ENCODE measurements at regions of chr5 and their contacts with region 1.

Region 1: GRCh38 chr5:111530298-111530740 is 18.0 kb upstream of the STARD4 start:
- DNase-seq: peak; percentile 88
- H3K4me3 Mint-ChIP-seq: peak overlapping the region; percentile 8
- H3K27ac Mint-ChIP-seq: peak overlapping the region; percentile 83
- H3K4me1 Mint-ChIP-seq: peaks cover 28% of the 10 kb centered on the region
- H3K27me3 Mint-ChIP-seq: peaks cover 3% of the 10 kb centered on the region

Region 2: DNA sequence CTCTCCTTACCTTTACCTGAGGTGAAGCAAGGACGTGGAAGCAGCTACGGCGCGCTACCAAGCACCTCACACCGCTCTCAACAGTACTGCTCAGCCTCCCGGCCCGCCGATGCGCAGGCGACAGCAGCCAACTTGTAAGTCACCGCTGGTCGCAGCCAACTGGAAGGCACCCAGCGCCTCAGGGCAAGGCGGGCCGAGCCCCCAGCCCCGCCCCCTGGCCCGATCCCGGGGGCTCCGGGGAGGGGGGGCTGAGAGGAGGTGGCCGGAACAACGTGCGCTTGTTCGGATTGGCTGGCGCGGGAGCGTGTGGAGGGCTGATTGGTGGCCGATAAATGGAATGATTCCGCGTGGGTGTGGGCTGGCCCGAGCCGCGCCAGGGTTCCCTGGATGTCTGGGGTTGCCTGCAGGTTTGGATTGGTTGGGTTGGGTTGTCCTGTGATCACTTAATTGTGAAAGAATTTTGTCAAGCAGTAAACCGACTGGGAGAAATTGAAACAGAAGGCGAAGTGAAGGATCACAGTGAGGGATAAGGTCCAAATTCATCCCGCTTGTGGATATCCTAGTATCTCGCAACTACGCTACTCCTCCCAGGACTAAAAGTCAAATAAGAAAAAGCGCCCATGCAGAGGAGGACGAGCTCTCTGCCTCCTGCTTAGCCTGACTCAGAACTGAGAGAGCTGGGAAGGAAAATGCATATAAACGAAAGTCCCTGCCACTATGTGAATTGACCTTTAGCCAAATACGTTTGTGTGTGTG is 17.8 kb before region 1 on chr5 and contains the start of gene STARD4:
- CTCF ChIA-PET with region 1: interaction called, 12 read pairs
- POLR2A ChIA-PET with region 1: no interaction called
- DNase-seq: peak; percentile 94
- H3K4me3 Mint-ChIP-seq: peak within 1 kb of the TSS; percentile 82
- H3K27ac Mint-ChIP-seq: peak within 1 kb of the TSS; percentile 91
- H3K4me1 Mint-ChIP-seq: peaks cover 56% of the 10 kb centered on the region
- H3K27me3 Mint-ChIP-seq: no peaks in the 10 kb centered on the region
- total RNA-seq, gene STARD4: 33.7 to 37.4 TPM

Region 3: GRCh38 chr5:111550279-111551020 is 20.1 kb after region 1 on chr5:
- CTCF ChIA-PET with region 1: interaction called, 11 read pairs
- POLR2A ChIA-PET with region 1: no interaction called
- DNase-seq: peak; percentile 85
- H3K4me3 Mint-ChIP-seq: no peak overlapping the region
- H3K27ac Mint-ChIP-seq: no peak overlapping the region
- H3K4me1 Mint-ChIP-seq: peaks cover 17% of the 10 kb centered on the region
- H3K27me3 Mint-ChIP-seq: peaks cover 4% of the 10 kb centered on the region

Region 4: DNA sequence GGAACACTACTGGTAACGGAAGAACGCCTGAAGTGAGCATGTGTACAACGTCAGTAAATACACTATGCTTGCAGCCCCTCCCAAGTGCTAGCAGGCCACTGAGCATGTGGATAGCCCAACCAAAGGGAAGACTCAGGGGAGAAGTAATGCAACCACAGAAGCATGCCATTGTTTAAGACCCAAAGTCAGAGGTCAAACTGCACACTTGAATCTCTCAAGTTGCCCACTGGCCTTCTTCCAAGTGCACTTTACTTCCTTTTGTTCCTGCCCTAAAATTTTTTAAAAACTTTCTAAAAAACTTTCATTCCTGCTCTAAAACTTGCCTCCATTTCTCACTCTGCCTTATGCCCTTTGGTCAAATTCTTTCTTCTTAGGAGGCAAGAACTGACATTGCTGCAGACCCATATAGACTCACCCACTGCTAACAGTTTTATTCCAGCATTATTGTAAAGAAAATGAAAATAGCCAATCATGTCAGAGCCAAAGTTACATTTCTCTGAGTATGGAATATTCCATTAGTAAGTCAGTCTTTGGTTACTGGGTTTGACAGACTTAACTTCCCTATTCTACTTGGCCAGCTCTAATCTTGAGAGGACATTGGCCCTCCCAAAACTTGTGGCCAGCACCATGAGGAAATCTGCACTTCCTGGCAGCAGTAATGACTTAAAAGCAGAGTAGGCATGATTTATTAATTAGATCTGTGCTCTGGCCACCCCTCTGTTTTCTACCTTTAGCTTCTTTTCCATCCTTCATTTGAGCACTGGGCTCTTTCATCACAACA is 1827.6 kb after region 1 on chr5:
- CTCF ChIA-PET with region 1: no interaction called
- POLR2A ChIA-PET with region 1: no interaction called
- DNase-seq: no peak
- H3K4me3 Mint-ChIP-seq: no peak overlapping the region
- H3K27ac Mint-ChIP-seq: no peak overlapping the region
- H3K4me1 Mint-ChIP-seq: no peaks in the 10 kb centered on the region
- H3K27me3 Mint-ChIP-seq: peaks cover 5% of the 10 kb centered on the region